ENCODE measurements at regions of chr14 and their contacts with region 1.

Region 1: DNA sequence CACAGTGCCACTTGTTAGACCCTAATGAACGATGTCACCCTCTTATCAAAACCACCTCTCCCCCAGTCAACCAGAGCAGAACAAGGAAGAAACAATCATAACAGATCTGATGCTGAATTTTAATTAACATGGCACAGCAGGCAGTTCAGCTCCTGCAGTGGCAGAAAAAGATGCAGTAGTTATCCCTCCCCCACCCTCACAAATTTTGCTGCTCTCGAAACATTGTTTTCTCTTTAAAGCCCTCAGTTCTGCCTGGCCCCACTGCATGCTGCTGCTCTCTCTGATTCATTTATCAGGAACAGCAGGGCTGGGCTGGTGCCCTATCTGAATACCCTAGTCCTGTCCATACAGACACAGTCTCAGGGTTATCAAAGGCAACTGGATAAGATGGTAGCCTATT is 12.2 kb downstream of the CCDC175 start:
- DNase-seq: no peak

Region 2: GRCh38 chr14:59576332-59577294 is 12.2 kb after region 1 on chr14 and contains the start of gene CCDC175:
- CTCF ChIA-PET with region 1: interaction called, 23 read pairs
- POLR2A ChIA-PET with region 1: no interaction called
- DNase-seq: peak; percentile 90

Region 3: GRCh38 chr14:59755388-59755787 is 191.0 kb after region 1 on chr14:
- CTCF ChIA-PET with region 1: no interaction called
- POLR2A ChIA-PET with region 1: no interaction called
- DNase-seq: no peak

Measured in HEK293T (cell line).